ENCODE measurements at regions of chr1 and their contacts with region 1.

Region 1: DNA sequence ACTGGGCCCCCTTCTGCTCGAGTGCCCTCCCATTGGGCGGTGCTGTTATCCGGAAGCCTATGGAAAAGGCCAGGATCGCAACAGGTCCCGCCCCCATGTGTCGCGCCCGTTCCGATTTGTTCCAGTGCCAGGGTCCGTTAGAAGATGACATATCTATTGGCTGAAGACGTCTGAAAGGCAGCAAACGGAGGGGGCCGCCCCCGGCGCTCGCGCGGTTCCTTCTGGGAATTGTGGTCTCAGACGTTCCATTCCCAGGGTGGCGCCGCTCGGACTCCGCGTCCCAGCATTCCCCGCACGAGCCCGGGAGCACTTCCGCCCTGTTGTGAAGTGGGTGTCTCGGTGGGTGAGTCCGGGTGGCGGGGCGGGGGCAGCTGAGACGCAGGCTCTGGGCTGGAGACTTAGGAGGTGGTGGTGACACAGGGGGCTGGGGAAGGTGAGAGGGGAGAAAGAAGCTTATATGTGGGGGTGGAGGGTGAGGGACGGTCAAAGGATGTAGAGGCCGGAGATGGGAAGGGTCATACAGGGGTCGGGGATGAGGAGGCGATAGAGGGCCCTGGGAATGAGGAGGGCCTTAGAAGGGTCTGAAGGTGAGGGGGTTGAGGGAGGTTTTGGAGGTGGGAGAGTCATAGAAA is at the start of gene ZSCAN20:
- DNase-seq: peak; percentile 90
- H3K4me3 ChIP-seq: peak within 1 kb of the TSS; percentile 73 to 80
- H3K27ac ChIP-seq: peak within 1 kb of the TSS; percentile 74 to 79; a peak in 3 of 4 replicates
- H3K4me1 ChIP-seq: peaks cover 18 to 26% of the 10 kb centered on the region in 2 experiments
- H3K27me3 ChIP-seq: no peaks in the 10 kb centered on the region
- CTCF ChIP-seq: no peak
- EP300 ChIP-seq: no peak
- RAD21 ChIP-seq: no peak
- polyA plus RNA-seq, gene ZSCAN20: 2.1 TPM in 2 replicates

Region 2: DNA sequence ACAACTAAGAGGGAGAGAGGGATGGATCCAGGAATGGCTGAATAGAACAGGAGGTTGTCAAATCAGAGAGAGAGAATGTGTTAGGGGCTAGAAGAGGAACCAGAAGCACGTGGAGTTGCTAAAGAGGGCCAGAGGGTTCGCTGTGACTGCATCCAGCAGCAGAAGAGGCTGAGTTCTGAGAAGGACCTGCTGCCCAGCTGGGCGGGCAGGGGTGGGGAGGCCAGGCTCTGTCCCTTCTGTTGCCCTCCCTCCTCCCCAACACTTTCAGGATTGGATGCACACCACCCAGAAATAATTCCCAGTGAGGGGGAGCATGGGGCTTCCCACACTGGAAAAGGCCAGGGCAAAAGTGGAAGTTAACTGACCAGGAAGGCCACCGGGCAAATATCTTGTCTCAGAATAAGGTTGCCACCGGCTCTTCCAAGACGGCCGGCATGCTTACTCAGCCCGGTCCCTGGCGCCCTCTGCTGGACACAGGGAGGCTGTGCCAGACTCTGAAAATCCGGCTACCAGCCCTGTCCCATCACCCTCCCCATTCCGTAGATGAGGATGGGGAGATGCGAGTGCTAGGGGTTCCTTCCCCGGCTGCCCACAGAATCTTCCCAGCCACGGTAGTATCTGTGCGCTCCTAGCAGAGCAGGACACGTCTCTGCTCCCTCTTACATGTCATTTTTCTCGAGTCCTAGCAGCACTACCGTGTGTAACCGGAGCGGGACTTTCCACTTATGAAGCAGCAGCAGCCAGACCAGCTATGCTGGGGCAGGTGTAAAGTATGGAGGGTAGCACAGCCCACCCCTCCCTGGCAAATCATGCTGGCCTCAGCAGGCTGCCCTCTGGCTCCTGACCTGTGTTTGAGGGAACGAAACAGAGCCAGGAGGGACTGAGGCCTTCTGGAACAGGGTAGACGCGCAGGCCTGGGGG is 104.7 kb before region 1 on chr1:
- CTCF ChIA-PET with region 1: interaction called, 14 read pairs
- POLR2A ChIA-PET with region 1: no interaction called
- DNase-seq: peak; percentile 93
- H3K4me3 ChIP-seq: no peak overlapping the region
- H3K27ac ChIP-seq: peak overlapping the region in 1 of 2 experiments; percentile 25; a peak in 1 of 4 replicates
- H3K4me1 ChIP-seq: peaks cover 0 to 57% of the 10 kb centered on the region in 2 experiments
- H3K27me3 ChIP-seq: no peaks in the 10 kb centered on the region
- CTCF ChIP-seq: peak; percentile 94
- EP300 ChIP-seq: no peak
- RAD21 ChIP-seq: peak; percentile 96

Region 3: GRCh38 chr1:33402206-33402605 is 70.3 kb before region 1 on chr1:
- CTCF ChIA-PET with region 1: no interaction called
- POLR2A ChIA-PET with region 1: no interaction called
- DNase-seq: no peak
- H3K4me3 ChIP-seq: no peak overlapping the region
- H3K27ac ChIP-seq: no peak overlapping the region
- H3K4me1 ChIP-seq: no peaks in the 10 kb centered on the region
- H3K27me3 ChIP-seq: no peaks in the 10 kb centered on the region
- CTCF ChIP-seq: no peak
- EP300 ChIP-seq: no peak
- RAD21 ChIP-seq: no peak

Region 4: DNA sequence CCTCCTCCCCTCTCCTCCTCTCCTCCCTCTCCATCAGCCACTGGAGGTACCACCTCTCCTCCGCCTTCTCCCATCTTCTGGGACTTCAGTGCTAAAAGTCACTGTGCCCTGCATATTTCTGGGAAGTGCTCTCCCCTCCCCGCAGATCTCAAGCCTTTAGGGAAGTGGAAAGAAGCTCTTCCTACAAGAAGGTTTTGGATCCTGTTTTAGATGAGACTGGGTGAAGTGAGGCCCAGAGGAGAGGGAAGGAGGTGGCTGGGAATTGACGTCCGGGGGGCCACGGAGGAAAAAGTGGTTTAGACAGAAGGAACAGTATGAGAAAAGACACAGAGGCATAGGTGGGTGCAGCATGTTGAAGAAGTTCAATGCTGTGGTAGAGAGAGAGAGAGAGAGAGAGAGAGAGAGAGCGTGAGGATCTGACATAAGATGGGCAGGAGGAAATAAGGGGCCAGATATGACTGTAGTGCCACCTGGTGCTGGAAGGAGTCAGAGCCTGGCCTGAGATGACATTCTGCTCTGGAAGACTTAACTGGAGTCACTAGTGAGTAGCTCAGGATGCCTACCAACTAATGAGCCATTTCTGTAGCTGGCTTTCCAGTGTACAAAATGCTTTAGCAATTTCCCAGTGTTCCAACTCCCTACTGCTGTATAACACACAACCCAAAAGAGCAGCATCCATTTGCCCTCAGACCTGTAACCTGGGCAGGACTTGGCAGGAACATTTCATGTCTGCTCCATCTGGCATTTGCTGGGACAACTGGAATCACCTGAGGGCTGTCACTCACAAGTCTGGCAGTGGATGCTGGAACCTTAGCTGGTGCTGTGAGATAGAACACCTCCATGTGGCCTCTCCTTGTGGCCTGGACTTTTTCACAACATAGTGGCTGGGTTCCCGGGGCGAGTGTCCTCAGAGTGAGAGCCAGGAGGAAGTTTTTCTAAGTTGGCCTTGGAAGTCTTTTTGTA is 16.6 kb before region 1 on chr1:
- CTCF ChIA-PET with region 1: interaction called, 31 read pairs
- POLR2A ChIA-PET with region 1: interaction called, 3 read pairs
- DNase-seq: peak; percentile 66
- H3K4me3 ChIP-seq: no peak overlapping the region; a peak in 1 of 4 replicates
- H3K27ac ChIP-seq: peak overlapping the region in 1 of 2 experiments; percentile 18; a peak in 1 of 4 replicates
- H3K4me1 ChIP-seq: peaks cover 0 to 6% of the 10 kb centered on the region in 2 experiments; a peak in 2 of 4 replicates
- H3K27me3 ChIP-seq: no peaks in the 10 kb centered on the region
- CTCF ChIP-seq: peak; percentile 81
- EP300 ChIP-seq: no peak
- RAD21 ChIP-seq: peak; percentile 87

Region 5: DNA sequence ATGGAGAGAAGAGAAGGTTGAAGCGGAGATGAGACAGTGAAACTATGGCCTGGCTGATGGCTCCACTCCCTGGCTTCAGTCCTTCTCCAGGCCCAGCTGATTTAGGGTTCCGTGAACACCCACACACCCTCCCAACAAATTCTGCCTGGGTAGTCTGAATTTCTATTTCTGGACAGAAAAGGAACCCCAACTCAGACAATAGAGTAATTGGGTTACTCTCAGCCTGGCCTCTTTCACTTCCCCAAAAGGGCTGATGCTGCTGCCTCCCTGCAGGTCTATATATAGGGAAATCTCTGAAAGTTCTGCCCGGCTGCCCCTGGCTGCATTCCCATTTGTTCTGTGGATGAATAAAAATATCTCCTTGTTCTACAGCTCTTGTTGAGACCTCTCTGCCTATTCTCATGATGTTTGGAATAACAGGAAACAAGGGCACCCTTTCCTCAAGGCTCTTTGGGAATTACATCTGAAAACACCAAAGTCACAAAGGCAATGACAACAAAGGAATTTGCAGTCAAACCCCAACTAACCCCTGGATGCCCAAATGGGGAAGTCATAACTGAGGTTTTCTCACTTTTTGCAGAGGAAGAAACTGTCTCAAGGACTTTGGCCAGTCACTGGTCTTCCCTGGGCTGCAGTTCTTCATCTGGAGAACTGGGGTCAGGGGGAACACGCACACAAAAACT is 11.4 kb before region 1 on chr1:
- CTCF ChIA-PET with region 1: interaction called, 31 read pairs
- POLR2A ChIA-PET with region 1: no interaction called
- DNase-seq: no peak
- H3K4me3 ChIP-seq: no peak overlapping the region
- H3K27ac ChIP-seq: no peak overlapping the region
- H3K4me1 ChIP-seq: peaks cover 0 to 2% of the 10 kb centered on the region in 2 experiments; a peak in 2 of 4 replicates
- H3K27me3 ChIP-seq: no peaks in the 10 kb centered on the region
- CTCF ChIP-seq: no peak
- EP300 ChIP-seq: no peak
- RAD21 ChIP-seq: no peak